Naive thymus-derived CD4-positive, alpha-beta T cell (primary cell): ENCODE measurements at regions of chr18 and their contacts with region 1.

Region 1: DNA sequence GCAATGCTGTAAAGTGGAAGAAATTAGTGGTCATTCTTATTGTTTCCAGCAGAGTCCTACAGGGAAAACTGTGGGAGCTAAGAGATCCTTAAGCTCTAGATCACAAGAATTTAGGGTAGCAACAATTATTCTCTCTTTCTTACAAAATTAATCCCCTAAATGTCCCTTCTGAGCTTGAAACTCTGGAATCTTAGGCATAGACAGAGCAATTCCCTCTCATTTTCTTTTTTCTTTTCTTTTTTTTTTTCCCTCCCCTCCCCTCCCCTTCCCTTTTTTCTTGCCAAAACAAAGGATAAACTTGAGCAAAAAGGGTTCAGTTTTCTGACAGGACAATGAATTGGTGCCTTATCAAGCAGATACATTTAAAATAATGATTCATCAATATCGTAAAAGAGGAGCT is 441.0 kb downstream of the DSC3 start:
- DNase-seq: no peak
- ATAC-seq: no peak
- H3K4me3 ChIP-seq: no peak overlapping the region
- H3K4me3 Mint-ChIP-seq: no peak overlapping the region
- H3K27ac ChIP-seq: no peak overlapping the region
- H3K27ac Mint-ChIP-seq: no peak overlapping the region
- H3K4me1 ChIP-seq: no peaks in the 10 kb centered on the region
- H3K4me1 Mint-ChIP-seq: no peaks in the 10 kb centered on the region
- H3K27me3 ChIP-seq: no peaks in the 10 kb centered on the region
- H3K27me3 Mint-ChIP-seq: no peaks in the 10 kb centered on the region

Region 2: GRCh38 chr18:30501594-30501993 is 99.9 kb before region 1 on chr18:
- CTCF ChIA-PET with region 1: no interaction called
- POLR2A ChIA-PET with region 1: no interaction called
- intact Hi-C with region 1: no loop called
- DNase-seq: no peak
- ATAC-seq: no peak
- H3K4me3 ChIP-seq: no peak overlapping the region
- H3K4me3 Mint-ChIP-seq: no peak overlapping the region
- H3K27ac ChIP-seq: no peak overlapping the region
- H3K27ac Mint-ChIP-seq: no peak overlapping the region
- H3K4me1 ChIP-seq: no peaks in the 10 kb centered on the region
- H3K4me1 Mint-ChIP-seq: no peaks in the 10 kb centered on the region
- H3K27me3 ChIP-seq: no peaks in the 10 kb centered on the region
- H3K27me3 Mint-ChIP-seq: no peaks in the 10 kb centered on the region

Region 3: GRCh38 chr18:30652387-30652786 is 50.8 kb after region 1 on chr18:
- CTCF ChIA-PET with region 1: no interaction called
- POLR2A ChIA-PET with region 1: no interaction called
- intact Hi-C with region 1: loop called in 1 of 2 experiments (anchors 10 kb)
- DNase-seq: no peak
- ATAC-seq: no peak
- H3K4me3 ChIP-seq: no peak overlapping the region
- H3K4me3 Mint-ChIP-seq: no peak overlapping the region
- H3K27ac ChIP-seq: no peak overlapping the region
- H3K27ac Mint-ChIP-seq: no peak overlapping the region
- H3K4me1 ChIP-seq: no peaks in the 10 kb centered on the region
- H3K4me1 Mint-ChIP-seq: no peaks in the 10 kb centered on the region
- H3K27me3 ChIP-seq: no peaks in the 10 kb centered on the region
- H3K27me3 Mint-ChIP-seq: no peaks in the 10 kb centered on the region

Region 4: GRCh38 chr18:30696201-30696600 is 94.7 kb after region 1 on chr18:
- CTCF ChIA-PET with region 1: no interaction called
- POLR2A ChIA-PET with region 1: no interaction called
- intact Hi-C with region 1: loop called in 1 of 2 experiments (anchors 10 kb)
- DNase-seq: no peak
- ATAC-seq: no peak
- H3K4me3 ChIP-seq: no peak overlapping the region
- H3K4me3 Mint-ChIP-seq: no peak overlapping the region
- H3K27ac ChIP-seq: no peak overlapping the region
- H3K27ac Mint-ChIP-seq: no peak overlapping the region
- H3K4me1 ChIP-seq: no peaks in the 10 kb centered on the region
- H3K4me1 Mint-ChIP-seq: no peaks in the 10 kb centered on the region
- H3K27me3 ChIP-seq: no peaks in the 10 kb centered on the region
- H3K27me3 Mint-ChIP-seq: no peaks in the 10 kb centered on the region

Region 5: GRCh38 chr18:31343454-31343853 is 741.9 kb after region 1 on chr18:
- CTCF ChIA-PET with region 1: no interaction called
- POLR2A ChIA-PET with region 1: no interaction called
- intact Hi-C with region 1: no loop called
- DNase-seq: no peak
- ATAC-seq: no peak
- H3K4me3 ChIP-seq: no peak overlapping the region
- H3K4me3 Mint-ChIP-seq: no peak overlapping the region
- H3K27ac ChIP-seq: no peak overlapping the region
- H3K27ac Mint-ChIP-seq: no peak overlapping the region
- H3K4me1 ChIP-seq: no peaks in the 10 kb centered on the region
- H3K4me1 Mint-ChIP-seq: no peaks in the 10 kb centered on the region
- H3K27me3 ChIP-seq: no peaks in the 10 kb centered on the region
- H3K27me3 Mint-ChIP-seq: no peaks in the 10 kb centered on the region